Motor neuron (in vitro differentiated cells): ENCODE measurements at regions of chr7 and their contacts with region 1.

Region 1: DNA sequence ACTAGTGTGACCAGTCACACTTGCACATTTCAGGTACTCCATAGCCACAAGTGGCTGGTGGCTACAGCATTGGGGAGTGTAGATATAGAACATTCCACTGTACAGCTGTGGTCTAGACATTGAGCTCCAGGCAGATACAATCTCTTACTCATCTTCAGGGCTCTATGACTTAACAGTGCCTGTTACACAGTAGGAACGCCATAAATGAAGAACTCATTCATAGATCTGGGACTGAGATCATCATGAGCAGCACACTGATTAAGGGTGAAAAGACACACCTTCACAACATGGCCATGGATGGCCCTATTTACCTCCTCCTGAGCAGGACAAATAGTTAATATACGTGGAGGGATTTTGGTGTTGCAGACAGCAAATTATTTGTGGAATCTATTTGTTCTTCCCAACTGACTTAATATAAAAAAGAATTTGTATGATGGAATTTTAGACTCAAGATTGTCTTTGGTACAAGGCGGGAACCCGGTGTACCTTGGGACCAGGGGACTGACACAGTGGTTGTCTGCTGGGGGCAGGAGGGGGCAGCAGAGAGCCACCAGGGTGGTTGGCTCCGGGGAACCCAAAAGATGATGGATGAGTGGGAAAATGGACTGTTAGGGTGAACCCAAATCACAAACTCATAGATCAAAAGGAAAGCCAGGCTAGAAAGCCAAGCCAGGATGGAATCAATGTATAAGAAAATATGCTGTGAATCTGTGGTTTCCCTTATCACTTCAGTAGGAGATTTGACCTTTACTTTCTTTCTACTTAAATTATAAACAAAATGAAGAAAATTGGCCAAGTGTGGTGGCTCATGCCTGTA is 24.3 kb upstream of the CPA2 start:
- ATAC-seq: peak in 4 of 8 experiments; percentile 48 to 94 (median 90)
- H3K4me3 ChIP-seq: no peak overlapping the region
- H3K27ac ChIP-seq: no peak overlapping the region
- H3K4me1 ChIP-seq: no peaks in the 10 kb centered on the region

Region 2: DNA sequence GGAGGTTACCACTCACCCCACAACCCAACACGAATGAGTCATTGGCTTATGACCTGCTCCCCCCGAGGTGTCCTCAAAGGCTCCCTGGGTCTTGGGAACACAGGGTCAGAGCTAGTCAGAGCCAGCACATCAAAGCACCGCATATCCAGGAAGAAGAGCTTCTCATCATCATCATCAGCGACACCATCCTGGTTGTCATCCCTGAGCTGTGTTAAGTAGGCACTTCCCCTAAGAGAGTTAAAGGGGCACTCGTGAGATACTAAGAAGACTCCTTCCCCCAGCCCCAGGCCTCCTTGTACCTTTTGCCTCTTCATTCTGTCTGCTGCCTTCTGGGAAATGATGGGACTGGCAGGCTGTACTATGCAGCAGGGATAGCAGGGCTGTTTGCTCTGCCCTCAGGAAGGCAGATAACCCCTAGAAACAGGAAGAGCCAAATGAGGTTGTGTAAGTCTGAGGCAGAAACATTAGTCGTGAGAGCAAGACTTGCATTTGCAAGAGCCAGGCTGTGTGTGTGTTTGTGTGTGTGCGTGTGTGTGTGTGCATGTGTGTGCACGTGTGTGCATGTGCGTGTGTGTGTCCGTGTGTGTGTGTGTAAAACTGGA is 126.8 kb after region 1 on chr7:
- in situ Hi-C with region 1: no loop called
- ATAC-seq: peak in 3 of 8 experiments; percentile 2 to 79 (median 3)
- H3K4me3 ChIP-seq: no peak overlapping the region
- H3K27ac ChIP-seq: no peak overlapping the region
- H3K4me1 ChIP-seq: peaks cover 49 to 65% of the 10 kb centered on the region in 2 donors

Region 3: GRCh38 chr7:130387628-130388403 is 145.4 kb after region 1 on chr7:
- in situ Hi-C with region 1: no loop called
- ATAC-seq: no peak
- H3K4me3 ChIP-seq: no peak overlapping the region
- H3K27ac ChIP-seq: no peak overlapping the region
- H3K4me1 ChIP-seq: peaks cover 13 to 14% of the 10 kb centered on the region in 2 donors

Region 4: DNA sequence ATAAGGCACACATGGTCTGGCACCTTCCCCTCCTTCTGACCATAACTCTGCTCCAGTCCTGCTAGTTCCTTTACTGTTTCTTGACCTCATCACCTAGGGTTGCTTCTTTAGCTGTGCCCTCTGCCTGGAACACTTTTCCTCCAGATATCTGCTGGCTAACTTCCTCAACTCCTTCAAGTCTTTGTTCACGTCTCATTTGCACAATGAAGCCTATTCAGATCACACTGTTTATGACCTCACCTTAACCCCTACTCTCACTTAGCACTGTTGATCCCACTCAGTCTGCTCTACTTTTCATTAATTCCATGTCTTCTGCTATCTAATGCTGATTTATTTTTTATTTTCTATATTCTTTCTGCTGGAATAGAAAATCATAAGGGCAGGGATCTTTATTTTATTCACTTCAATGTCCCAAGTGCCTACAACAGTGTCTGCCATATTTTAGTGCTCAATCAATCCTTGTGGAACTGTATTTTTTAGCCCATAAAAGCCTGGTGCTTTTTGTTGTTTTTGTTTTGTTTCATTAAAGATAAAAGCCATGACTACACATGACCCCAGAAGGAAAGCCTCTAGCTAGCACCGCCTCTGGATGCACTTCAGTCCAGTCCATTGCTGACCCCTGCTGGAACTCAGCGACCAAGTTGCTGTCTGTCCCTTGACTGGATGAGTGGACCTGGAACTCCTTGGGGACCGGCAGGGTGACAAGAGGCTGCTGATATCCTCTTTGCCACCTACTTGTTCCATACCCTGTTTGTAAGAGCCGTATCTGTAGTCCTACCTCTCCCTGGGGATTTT is 479.3 kb after region 1 on chr7:
- in situ Hi-C with region 1: loop called in 1 of 9 experiments (anchors 25 kb)
- ATAC-seq: peak; percentile 84 to 100 (median 96)
- H3K4me3 ChIP-seq: no peak overlapping the region
- H3K27ac ChIP-seq: no peak overlapping the region
- H3K4me1 ChIP-seq: peaks cover 0 to 7% of the 10 kb centered on the region in 2 donors